GM10248 (cell line): ENCODE measurements at regions of chr14 and their contacts with region 1.

Region 1: DNA sequence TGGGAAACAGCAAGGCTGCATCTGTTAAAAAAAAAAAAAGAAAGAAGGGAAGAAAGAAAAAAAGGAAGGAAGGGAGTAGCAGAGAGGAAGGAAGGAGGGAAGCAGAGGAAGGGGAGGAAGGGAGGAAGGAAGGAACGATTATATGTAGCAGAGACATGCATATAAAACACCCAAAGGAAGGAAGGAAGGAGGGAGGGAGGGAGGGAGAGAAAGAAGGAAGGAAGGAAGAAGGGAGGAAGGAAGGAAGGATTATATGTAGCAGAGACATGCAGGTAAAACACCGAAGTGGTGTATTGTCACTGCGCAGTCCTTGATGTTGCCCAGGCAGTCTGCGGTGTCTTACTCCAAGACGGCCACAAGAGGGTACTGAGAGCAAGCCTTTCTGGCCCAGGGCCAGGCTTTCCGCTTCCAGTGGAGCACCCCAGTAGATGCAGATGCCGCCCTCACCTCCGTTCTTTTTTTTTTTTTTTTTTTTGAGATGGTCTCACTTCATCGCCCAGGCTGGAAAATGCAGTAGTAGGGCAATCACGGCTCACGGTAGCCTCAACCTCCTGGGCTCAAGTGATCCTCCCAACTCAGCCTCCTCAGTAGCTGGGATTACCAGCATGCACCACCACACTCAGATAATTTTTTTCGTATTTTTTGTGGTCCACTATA is 5.8 kb upstream of the LBHD2 start:
- DNase-seq: peak; percentile 85
- CTCF ChIP-seq: peak; percentile 87

Region 2: DNA sequence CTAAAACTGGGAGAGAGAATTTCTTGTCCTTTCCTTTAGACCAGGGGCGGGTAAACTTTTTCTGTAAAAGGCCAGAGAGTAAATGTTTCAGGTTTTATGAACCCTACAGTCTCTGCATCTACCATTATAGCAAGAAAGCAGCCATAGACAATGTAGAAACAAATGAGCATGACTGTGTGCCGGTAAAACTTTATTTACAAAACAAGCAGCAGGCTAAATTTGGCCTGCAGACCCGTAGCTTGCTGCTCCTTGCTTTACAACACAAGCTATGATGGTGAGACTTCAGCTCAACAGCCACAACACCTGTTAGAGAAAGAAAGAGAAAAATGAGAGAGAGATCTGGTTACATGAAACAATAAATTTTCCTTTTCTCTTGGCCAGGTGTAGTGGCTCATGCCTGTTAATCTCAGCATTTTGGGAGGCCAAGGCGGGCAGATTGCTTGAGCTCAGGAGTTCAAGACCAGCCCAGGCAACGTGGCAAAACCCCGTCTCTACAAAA is 16.7 kb before region 1 on chr14:
- CTCF ChIA-PET with region 1: interaction called, 10 read pairs
- POLR2A ChIA-PET with region 1: no interaction called
- DNase-seq: no peak
- CTCF ChIP-seq: no peak

Region 3: DNA sequence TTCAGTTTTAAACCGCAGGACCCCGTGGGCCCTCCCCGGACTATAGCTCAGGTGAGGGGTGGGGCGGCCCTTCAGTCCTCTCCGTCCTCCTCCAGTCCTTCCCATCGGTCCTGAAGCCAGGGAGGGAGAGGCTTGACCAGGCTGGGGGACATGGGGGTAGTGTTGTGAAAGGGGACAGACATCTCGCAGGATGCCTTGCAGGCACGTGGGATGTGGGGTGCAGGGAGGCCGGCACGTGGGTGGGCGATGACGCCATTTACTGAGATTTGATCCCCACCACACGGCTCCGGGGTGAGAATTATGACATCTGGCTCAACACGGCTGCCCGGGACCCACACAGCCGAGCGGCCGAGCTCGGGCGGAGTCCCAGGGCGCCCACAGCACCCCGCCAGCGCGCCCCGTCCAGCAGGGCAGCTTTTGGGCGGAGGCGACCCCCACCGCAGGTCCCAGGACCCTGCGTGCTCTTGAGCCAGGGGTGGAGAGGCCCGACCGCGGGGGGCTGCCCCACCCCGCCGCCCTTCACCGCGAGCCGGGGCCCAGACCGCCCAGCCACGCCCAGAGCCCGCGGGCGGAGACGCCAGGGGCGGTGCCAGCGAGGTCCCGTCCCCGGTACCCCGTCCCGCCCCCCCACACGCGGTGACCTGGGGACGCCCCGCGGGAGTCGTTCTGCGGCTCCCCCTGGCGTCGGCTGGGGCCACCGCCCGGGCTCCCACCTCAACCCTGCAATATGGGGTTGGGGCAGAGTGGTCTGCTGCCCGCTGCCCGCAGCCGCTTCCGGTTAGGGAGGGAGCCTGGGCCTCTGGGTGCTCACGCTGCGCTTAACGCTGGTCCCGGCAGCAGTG is 13.0 kb after region 1 on chr14:
- CTCF ChIA-PET with region 1: interaction called, 15 read pairs
- POLR2A ChIA-PET with region 1: no interaction called
- DNase-seq: peak; percentile 92
- CTCF ChIP-seq: peak; percentile 73

Region 4: GRCh38 chr14:103097244-103097993 is 19.2 kb after region 1 on chr14:
- CTCF ChIA-PET with region 1: interaction called, 15 read pairs
- POLR2A ChIA-PET with region 1: no interaction called
- DNase-seq: no peak
- CTCF ChIP-seq: no peak

Region 5: GRCh38 chr14:103292426-103293374 is 214.5 kb after region 1 on chr14:
- CTCF ChIA-PET with region 1: interaction called, 18 read pairs
- POLR2A ChIA-PET with region 1: no interaction called
- DNase-seq: peak; percentile 88
- CTCF ChIP-seq: peak; percentile 94